Transverse colon (tissue), 4 donors: ENCODE measurements at regions of chr10 and their contacts with region 1.

Region 1: DNA sequence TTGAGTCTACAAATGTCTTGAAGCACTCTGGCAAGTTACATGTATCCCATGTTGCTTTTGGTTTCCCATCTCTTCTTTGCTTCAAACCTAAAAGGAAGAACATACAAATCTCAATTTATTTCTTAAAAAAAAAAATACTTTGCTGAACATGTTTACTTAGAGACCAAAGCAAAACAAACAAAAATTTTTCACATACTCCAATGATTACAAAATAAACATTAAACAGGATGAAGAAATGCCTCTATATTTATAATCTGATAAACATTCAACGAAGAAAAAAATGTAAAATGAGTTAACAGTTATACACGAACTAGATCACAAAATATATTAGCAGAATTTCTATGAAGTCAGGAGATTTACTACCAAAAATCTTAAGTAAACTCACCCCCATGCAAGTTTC is 31.3 kb downstream of the FAM204A start:
- DNase-seq: no peak
- H3K4me3 ChIP-seq: no peak overlapping the region
- H3K27ac ChIP-seq: peak overlapping the region in 2 of 4 donors; percentile 39 to 51
- H3K4me1 ChIP-seq: peaks cover 0 to 7% (median 3%) of the 10 kb centered on the region in 4 donors
- H3K27me3 ChIP-seq: no peaks in the 10 kb centered on the region
- CTCF ChIP-seq: no peak
- EP300 ChIP-seq: no peak
- POLR2A ChIP-seq: no peak

Region 2: GRCh38 chr10:118333871-118334270 is 23.0 kb after region 1 on chr10:
- in situ Hi-C with region 1: no loop called
- intact Hi-C with region 1: loop called (anchors 1 kb)
- DNase-seq: no peak
- H3K4me3 ChIP-seq: no peak overlapping the region
- H3K27ac ChIP-seq: no peak overlapping the region
- H3K4me1 ChIP-seq: peaks cover 0 to 16% (median 0%) of the 10 kb centered on the region in 4 donors
- H3K27me3 ChIP-seq: no peaks in the 10 kb centered on the region
- CTCF ChIP-seq: no peak
- EP300 ChIP-seq: no peak
- POLR2A ChIP-seq: no peak